Gastrocnemius medialis (tissue), 4 donors: ENCODE measurements at regions of chr1 and their contacts with region 1.

Region 1: DNA sequence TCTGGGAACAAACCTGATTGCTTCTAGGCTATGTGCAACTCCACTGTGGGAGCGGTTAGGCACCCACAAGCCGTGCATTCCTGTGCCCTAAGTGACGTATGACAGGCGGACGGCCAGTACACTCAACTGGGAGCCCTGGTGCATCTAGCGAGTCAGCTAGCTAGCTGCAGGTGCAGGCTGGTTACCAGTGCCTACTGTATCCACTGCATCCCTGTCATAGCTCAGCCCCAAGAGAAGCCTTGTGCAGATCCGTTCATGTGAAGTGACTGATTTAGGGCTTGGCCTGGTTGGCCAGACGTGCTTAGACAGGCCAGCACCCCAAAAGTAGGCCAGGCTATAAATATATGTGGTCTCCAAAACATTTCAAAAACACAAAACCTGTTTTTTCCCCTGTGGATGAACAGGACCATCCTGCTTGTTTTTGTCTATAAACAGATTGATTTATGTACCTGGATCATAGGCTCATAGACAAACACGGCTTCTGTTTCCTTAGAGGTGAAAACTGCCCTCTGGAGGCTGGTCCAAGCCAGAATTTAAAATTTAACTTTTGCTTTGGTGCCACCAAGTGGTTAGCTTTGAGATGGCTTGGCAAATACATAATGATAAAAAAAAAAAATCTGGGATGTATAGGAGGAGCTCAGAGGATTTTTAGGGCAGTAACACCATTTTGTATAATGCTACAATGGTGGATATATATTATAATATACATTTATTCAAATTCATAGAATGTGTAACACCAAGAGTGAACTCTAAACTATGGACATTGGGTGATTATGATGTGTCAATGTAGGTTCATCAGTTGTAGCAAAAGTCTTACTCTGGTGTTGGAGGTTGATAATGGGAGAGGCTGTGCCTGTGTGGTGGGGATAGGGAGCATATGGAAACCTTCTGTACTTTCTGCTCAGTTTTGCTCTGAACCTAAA is 68.5 kb downstream of the GIPC2 start:
- DNase-seq: peak; percentile 19 to 47
- ATAC-seq: peak; percentile 96 to 98
- H3K4me3 ChIP-seq: peak overlapping the region in 1 of 4 donors; percentile 9
- H3K27ac ChIP-seq: peak overlapping the region; percentile 54 to 82 (median 67)
- H3K4me1 ChIP-seq: peaks cover 8 to 11% of the 10 kb centered on the region in 2 donors
- H3K27me3 ChIP-seq: no peaks in the 10 kb centered on the region
- CTCF ChIP-seq: peak; percentile 75 to 90 (median 86)
- POLR2A ChIP-seq: no peak

Region 2: DNA sequence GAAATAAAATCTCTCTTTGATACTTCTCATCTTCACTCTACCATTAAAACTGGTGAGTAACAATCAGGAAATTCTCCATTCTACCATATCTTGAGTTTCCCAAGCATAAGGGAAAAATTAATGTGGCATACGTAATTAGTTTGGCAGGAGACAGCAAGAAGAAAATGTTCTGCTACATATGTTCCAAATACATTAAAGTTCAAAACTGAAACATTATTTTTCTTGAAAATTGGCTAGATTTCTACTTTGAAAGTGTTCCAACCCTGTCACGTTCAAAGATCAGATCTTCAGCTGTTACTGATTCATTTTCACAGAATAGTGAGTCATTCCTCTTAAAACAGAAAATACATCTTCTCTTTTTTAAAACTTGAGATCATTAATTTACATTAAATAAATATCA is 943.6 kb before region 1 on chr1:
- in situ Hi-C with region 1: loop called in 1 of 4 experiments (anchors 25 kb)
- intact Hi-C with region 1: no loop called
- DNase-seq: no peak
- ATAC-seq: no peak
- H3K4me3 ChIP-seq: no peak overlapping the region
- H3K27ac ChIP-seq: no peak overlapping the region
- H3K4me1 ChIP-seq: no peaks in the 10 kb centered on the region
- H3K27me3 ChIP-seq: no peaks in the 10 kb centered on the region
- CTCF ChIP-seq: no peak
- POLR2A ChIP-seq: no peak

Region 3: DNA sequence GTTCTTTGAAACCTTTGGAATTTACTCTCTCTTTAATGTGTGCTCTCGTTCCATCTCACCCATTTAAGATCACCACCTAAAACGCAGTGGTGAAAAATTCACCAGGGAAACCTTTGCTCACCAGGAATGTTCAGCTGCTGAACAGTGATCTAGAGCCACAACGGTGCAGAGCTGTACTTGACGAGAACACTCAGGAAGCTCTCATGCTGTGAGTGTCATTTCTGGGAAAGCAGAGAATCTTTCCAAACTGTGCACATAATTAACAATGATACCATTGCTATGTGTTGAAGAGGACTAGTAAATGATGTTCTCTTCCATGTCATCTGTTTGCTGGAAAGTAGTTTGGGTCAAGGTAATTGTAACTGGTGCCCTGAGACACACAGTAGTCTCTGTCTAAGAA is 549.0 kb before region 1 on chr1:
- in situ Hi-C with region 1: no loop called
- intact Hi-C with region 1: no loop called
- DNase-seq: no peak
- ATAC-seq: no peak
- H3K4me3 ChIP-seq: no peak overlapping the region
- H3K27ac ChIP-seq: no peak overlapping the region
- H3K4me1 ChIP-seq: no peaks in the 10 kb centered on the region
- H3K27me3 ChIP-seq: no peaks in the 10 kb centered on the region
- CTCF ChIP-seq: no peak
- POLR2A ChIP-seq: no peak

Region 4: DNA sequence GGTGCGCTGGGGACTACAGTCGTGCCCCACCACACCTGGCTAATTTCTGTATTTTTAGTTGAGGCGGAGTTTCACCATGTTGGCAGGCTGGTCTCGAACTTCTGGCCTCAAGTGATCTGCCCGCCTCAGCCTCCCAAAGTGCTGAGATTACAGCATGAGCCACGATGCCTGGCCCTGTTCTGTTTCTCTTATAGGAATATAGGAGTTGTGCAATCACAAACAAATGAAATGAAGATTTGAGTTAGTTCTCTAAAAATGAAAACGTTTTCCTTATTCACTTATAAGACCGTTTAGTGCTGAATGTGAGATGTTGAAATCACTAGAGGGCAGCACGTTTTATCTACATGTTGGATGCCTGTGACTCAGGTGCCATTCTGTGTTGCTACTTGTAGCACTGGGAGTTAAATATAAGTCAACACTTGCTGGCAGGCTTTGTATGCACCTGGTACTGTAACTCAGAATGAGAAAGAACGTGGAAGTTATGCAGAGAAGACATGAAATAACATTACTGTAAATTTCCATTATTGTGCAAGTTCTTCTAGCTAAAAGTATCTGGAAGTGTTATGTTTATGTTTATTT is 289.1 kb before region 1 on chr1:
- in situ Hi-C with region 1: loop called in 2 of 4 experiments (anchors 5 to 25 kb)
- intact Hi-C with region 1: loop called (anchors 2 kb)
- DNase-seq: peak; percentile 90
- ATAC-seq: peak; percentile 88 to 92
- H3K4me3 ChIP-seq: no peak overlapping the region
- H3K27ac ChIP-seq: peak overlapping the region; percentile 91 to 100 (median 97)
- H3K4me1 ChIP-seq: peaks cover 32 to 44% of the 10 kb centered on the region in 2 donors
- H3K27me3 ChIP-seq: no peaks in the 10 kb centered on the region
- CTCF ChIP-seq: peak in 1 of 5 experiments; percentile 11
- POLR2A ChIP-seq: peak in 1 of 2 donors; percentile 7

Region 5: DNA sequence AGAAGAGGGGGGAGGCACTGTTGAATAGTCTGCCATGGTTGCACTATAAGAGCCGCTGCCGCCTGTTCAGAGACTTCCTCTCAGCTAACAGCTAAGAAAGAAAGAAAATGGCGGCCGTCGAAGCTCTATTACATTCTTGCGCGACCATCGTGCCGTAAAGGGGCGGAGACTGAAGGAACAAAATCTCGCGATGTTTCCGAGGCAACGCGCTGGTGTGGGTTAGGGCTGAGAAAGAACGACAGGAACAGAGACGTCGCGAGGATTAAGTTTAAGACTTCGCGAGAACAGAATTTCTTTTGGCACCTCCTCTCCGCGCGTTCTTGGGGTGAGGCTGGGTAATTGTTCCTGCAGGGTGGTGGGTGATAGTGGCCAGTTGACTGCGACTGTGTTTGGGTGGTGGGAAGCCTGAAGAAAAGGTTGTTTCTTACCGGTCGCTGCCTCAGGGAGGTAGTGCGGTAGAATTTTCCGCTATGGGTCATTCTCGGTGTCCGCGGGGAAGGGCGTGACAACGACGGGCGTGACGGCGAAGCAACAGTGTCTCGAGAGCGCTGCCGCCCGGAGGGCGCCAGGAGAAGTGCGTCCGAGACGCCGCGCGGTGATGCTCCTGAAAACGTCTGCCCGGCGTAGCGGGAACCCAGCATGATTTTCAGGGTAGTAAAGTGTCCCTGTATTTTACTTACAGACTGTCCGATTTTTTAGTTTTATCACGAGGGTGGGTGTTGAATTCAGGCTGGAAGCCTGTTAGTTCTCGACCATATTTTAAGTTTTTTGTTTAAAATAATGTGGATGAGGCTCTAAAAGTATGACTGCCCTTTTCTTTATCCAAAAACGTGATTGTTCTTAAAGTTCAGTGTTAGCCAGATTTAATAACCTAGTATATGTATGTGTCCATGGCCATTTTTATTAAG is 135.1 kb before region 1 on chr1 and contains the start of gene FUBP1:
- in situ Hi-C with region 1: loop called (anchors 5 to 25 kb)
- intact Hi-C with region 1: loop called (anchors 1 kb)
- DNase-seq: peak; percentile 95 to 96
- ATAC-seq: peak; percentile 88 to 91
- H3K4me3 ChIP-seq: peak within 1 kb of the TSS; percentile 69 to 82 (median 79)
- H3K27ac ChIP-seq: peak within 1 kb of the TSS; percentile 91 to 97 (median 94)
- H3K4me1 ChIP-seq: peaks cover 52 to 54% of the 10 kb centered on the region in 2 donors
- H3K27me3 ChIP-seq: no peaks in the 10 kb centered on the region
- CTCF ChIP-seq: peak; percentile 68 to 83 (median 81)
- POLR2A ChIP-seq: peak; percentile 80 to 81
- total RNA-seq, gene FUBP1: 25.6 to 64.3 (median 47.8) TPM

Region 6: DNA sequence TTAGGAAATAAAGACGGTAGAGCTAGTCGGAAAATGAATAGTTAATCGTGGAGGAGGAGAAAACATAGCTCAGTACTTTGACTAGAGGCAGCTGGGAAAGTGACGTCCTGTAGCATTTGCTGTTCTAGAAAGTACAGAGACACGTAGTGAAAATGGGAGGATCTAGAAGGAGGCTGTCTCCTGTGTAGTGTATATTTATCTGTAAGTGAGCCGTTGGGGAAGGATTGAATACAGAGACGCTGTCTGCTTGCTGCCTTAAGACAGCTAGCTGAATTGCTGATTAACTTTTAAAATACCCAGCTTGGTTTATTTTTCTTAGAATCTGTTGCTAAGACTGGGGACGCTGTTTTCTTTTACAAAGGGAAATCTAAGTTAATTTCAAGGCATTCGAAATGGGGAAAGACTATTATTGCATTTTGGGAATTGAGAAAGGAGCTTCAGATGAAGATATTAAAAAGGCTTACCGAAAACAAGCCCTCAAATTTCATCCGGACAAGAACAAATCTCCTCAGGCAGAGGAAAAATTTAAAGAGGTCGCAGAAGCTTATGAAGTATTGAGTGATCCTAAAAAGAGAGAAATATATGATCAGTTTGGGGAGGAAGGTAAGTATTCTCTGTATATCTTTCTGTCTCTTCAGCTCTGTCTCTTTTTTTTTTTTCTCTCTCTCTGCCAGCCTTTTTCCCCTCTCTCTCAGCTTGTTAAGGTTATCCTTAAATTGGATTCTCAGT is 109.4 kb before region 1 on chr1 and contains the start of gene DNAJB4:
- in situ Hi-C with region 1: no loop called
- intact Hi-C with region 1: loop called (anchors 1 kb)
- DNase-seq: peak; percentile 83 to 84
- ATAC-seq: peak; percentile 99
- H3K4me3 ChIP-seq: peak within 1 kb of the TSS; percentile 65 to 81 (median 70)
- H3K27ac ChIP-seq: peak within 1 kb of the TSS; percentile 83 to 97 (median 91)
- H3K4me1 ChIP-seq: peaks cover 19 to 41% of the 10 kb centered on the region in 2 donors
- H3K27me3 ChIP-seq: no peaks in the 10 kb centered on the region
- CTCF ChIP-seq: peak in 1 of 5 experiments; percentile 13
- POLR2A ChIP-seq: peak; percentile 92 to 100
- total RNA-seq, gene DNAJB4: 35.6 to 84.9 (median 45.3) TPM

Region 7: GRCh38 chr1:78068681-78069283 is 45.5 kb before region 1 on chr1:
- in situ Hi-C with region 1: no loop called
- intact Hi-C with region 1: loop called (anchors 5 kb)
- DNase-seq: peak; percentile 65 to 73
- ATAC-seq: peak; percentile 82 to 84
- H3K4me3 ChIP-seq: no peak overlapping the region
- H3K27ac ChIP-seq: peak overlapping the region; percentile 77 to 86 (median 82)
- H3K4me1 ChIP-seq: peaks cover 25 to 44% of the 10 kb centered on the region in 2 donors
- H3K27me3 ChIP-seq: no peaks in the 10 kb centered on the region
- CTCF ChIP-seq: no peak
- POLR2A ChIP-seq: no peak